ENCODE measurements at regions of chr7 and their contacts with region 1.

Region 1: GRCh38 chr7:876167-876967 is at the start of gene GET4:
- DNase-seq: peak; percentile 96 to 99 (median 98)
- H3K4me3 ChIP-seq: peak within 1 kb of the TSS; percentile 95
- H3K27ac ChIP-seq: peak within 1 kb of the TSS; percentile 82 to 85
- H3K4me1 ChIP-seq: peaks cover 22% of the 10 kb centered on the region
- H3K27me3 ChIP-seq: no peaks in the 10 kb centered on the region
- CTCF ChIP-seq: peak in 2 of 3 donors; percentile 46 to 50
- EP300 ChIP-seq: no peak
- POLR2A ChIP-seq: peak; percentile 85
- total RNA-seq, gene GET4: 16.8 to 37.6 (median 30.4) TPM

Region 2: GRCh38 chr7:518630-519483 is 357.5 kb before region 1 on chr7:
- intact Hi-C with region 1: loop called in 1 of 4 experiments (anchors 10 kb)
- DNase-seq: peak; percentile 49 to 74 (median 67)
- H3K4me3 ChIP-seq: peak overlapping the region; percentile 46
- H3K27ac ChIP-seq: peak overlapping the region in 1 of 2 donors; percentile 52
- H3K4me1 ChIP-seq: peaks cover 15% of the 10 kb centered on the region
- H3K27me3 ChIP-seq: peaks cover 7% of the 10 kb centered on the region
- CTCF ChIP-seq: no peak
- EP300 ChIP-seq: no peak
- POLR2A ChIP-seq: no peak

Region 3: DNA sequence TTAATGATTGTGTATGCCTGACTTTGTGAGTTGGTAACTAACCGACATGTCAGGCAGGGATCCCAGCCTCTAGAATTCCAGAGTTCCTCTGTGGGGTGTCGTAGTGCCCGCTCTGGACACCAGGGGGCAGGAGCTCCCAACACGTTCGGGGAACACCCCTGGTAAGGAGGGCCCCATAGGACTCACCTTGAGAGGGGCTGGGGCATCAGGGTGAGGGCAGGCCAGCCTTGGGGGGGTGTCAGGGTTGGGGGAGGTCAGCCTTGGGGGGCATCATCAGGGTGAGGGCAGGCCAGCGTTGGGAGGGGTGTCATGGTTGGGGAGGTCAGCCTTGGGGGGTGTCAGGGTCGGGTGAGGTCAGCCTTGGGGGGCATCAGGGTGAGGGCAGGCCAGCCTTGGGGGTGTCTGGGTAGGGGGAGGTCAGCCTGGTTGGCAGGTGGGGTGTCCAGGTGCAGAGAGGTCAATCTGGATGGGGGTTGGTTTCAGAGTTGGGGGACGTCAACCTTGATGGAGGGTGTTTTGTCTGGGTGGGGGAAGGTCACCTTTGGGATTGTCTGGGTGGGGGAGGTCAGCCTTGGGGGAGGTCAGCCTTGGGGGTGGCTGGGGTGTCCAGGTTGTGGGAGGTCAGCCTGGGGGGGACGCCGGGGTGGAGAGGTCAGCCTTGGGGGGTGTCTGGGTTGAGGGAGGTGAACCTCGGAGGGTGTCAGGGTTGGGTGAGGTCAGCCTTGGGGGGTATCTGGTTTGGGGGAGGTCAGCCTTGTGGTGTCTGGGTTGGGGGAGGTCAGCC is 89.7 kb before region 1 on chr7:
- intact Hi-C with region 1: loop called in 3 of 4 experiments (anchors 5 to 10 kb)
- DNase-seq: peak; percentile 67 to 87 (median 84)
- H3K4me3 ChIP-seq: no peak overlapping the region
- H3K27ac ChIP-seq: peak overlapping the region in 1 of 2 donors; percentile 37
- H3K4me1 ChIP-seq: peaks cover 13% of the 10 kb centered on the region
- H3K27me3 ChIP-seq: no peaks in the 10 kb centered on the region
- CTCF ChIP-seq: peak; percentile 37 to 87 (median 85)
- EP300 ChIP-seq: no peak
- POLR2A ChIP-seq: no peak

Region 4: GRCh38 chr7:801940-802381 is 74.4 kb before region 1 on chr7:
- intact Hi-C with region 1: loop called in 1 of 4 experiments (anchors 5 kb)
- DNase-seq: peak; percentile 74 to 84 (median 77)
- H3K4me3 ChIP-seq: peak overlapping the region; percentile 22
- H3K27ac ChIP-seq: peak overlapping the region in 1 of 2 donors; percentile 54
- H3K4me1 ChIP-seq: peaks cover 15% of the 10 kb centered on the region
- H3K27me3 ChIP-seq: no peaks in the 10 kb centered on the region
- CTCF ChIP-seq: no peak
- EP300 ChIP-seq: no peak
- POLR2A ChIP-seq: no peak

Region 5: DNA sequence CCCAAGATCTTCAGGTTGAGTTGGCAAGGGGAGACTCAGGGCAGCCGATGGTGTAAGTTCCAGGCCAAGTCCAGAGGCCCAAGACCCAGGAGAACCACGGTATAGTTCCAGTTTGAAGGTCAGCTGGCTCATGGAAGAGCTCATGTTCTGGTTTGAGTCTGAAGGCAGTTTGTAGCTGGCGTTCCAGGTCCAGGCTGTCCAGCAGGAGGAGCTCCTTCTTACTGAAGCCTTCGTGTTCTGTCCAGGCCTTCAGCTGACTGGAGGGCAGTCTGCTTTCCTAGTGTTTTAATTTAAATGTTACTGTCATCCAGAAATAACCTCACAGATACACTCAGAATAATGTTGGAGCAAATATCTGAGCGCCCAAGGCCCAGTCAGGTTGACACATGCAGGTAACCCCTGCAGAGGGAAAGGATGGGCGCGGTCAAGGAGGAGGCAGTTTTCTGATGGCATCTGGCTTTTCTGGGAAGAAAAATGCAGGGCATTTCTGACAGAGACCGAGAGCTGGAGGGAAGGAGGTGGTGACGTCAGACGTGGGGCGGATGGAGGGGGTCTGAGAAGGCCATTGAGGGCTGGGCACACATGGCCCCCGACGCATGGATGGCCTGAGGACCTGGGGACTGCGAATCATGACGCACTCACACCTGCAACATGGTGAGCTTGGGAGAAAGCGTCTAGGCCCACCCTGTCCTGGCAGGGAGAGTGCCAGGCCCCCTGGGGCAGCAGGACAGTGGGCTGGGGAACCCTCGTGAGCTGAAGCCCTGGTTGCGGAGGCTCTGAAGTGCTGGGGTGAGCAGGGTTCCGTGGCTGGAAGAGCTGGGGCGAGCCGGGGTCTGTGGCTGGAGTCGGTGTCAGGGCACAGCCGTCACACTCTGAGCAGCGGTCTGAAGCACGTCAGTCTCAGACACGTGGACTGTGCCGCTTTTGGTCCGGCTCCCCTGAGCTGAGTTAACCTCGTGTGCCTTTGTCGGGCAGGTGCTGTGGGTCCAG is 39.7 kb before region 1 on chr7:
- intact Hi-C with region 1: loop called in 1 of 4 experiments (anchors 5 kb)
- DNase-seq: no peak
- H3K4me3 ChIP-seq: no peak overlapping the region
- H3K27ac ChIP-seq: no peak overlapping the region
- H3K4me1 ChIP-seq: peaks cover 30% of the 10 kb centered on the region
- H3K27me3 ChIP-seq: no peaks in the 10 kb centered on the region
- CTCF ChIP-seq: no peak
- EP300 ChIP-seq: no peak
- POLR2A ChIP-seq: no peak

Region 6: GRCh38 chr7:842431-843031 is 33.8 kb before region 1 on chr7:
- intact Hi-C with region 1: loop called in 2 of 4 experiments (anchors 2 to 5 kb)
- DNase-seq: peak in 1 of 5 donors; percentile 41
- H3K4me3 ChIP-seq: no peak overlapping the region
- H3K27ac ChIP-seq: peak overlapping the region in 1 of 2 donors; percentile 11
- H3K4me1 ChIP-seq: peaks cover 15% of the 10 kb centered on the region
- H3K27me3 ChIP-seq: no peaks in the 10 kb centered on the region
- CTCF ChIP-seq: no peak
- EP300 ChIP-seq: no peak
- POLR2A ChIP-seq: no peak

Region 7: DNA sequence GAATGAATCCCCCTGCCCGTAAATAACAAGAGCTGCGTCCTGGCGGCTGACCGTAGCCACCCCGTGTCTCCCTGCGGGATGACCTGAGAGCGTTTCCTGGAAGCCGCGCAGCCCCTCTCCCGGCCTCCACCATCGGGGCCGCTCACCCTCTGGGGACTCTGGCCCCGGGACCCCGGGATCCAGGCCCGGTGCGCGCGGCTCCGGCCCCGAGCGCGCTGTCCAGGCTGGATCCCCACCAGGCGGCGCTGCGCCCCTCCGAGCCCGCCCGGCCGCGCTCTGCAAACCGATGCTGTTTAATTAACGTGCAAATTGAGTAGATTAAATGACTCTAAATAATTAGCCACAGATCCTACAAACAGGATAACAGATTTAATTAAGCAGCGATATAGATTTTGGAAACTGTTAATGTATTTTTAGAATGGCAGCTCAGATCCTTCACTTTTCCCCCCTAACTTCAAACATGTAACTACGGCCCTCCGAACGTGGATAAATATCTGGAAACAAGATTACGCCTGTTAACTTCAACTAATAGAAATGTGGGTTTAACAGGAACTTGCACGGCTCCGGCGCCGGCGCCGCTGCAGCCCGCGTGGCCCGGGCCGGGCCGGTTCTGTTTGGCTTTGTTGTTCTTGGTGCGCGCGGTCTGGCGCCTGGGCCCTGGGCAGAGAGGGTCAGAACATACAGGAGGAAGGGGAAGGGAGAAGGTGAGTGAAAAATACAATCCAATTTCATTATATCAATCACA is 349.2 kb after region 1 on chr7:
- intact Hi-C with region 1: no loop called
- DNase-seq: peak in 1 of 5 donors; percentile 52
- H3K4me3 ChIP-seq: no peak overlapping the region
- H3K27ac ChIP-seq: no peak overlapping the region
- H3K4me1 ChIP-seq: no peaks in the 10 kb centered on the region
- H3K27me3 ChIP-seq: peaks cover 12% of the 10 kb centered on the region
- CTCF ChIP-seq: peak in 2 of 3 donors; percentile 17 to 52
- EP300 ChIP-seq: no peak
- POLR2A ChIP-seq: no peak

Measured in ovary (tissue), 10 donors.